ENCODE measurements at regions of chr20 and their contacts with region 1.

Region 1: DNA sequence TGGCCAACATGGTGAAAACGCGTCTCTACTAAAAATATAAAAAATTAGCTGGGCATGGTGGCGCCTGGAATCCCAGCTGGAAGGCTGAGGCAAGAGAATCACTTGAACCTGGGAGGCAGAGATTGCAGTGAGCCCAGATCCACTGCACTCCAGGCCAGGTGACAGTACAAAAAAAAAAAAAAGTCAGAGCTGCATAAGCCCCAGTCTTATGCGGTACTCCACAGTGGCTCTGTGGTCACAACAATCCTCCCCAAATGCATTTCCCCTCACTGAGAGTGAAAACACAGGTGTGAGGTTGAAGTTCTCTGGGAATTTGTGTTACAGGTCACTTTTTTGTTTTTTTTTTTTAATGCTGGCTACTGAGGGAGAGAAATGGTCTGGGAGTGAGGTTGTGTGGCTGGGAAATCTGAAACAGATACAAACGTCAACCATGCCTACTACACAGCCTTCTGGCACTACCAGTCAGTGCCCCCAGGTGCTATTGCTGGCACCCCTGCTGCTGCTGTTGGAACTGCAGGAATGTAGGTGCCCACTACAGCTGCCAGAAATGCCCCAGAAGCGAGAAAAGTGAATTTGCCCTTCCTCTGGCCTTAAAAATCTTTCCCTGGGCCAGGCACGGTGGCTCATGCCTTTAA is 5.7 kb downstream of the MRPS26 start:
- DNase-seq: no peak
- ATAC-seq: no peak
- H3K4me3 ChIP-seq: no peak overlapping the region
- H3K4me1 ChIP-seq: peaks cover 12% of the 10 kb centered on the region
- CTCF ChIP-seq: no peak

Region 2: GRCh38 chr20:2967841-2968240 is 83.7 kb before region 1 on chr20:
- intact Hi-C with region 1: no loop called
- DNase-seq: no peak
- ATAC-seq: no peak
- H3K4me3 ChIP-seq: no peak overlapping the region
- H3K4me1 ChIP-seq: no peaks in the 10 kb centered on the region
- CTCF ChIP-seq: no peak

Region 3: GRCh38 chr20:3115190-3116107 is 63.9 kb after region 1 on chr20:
- intact Hi-C with region 1: loop called in 1 of 2 experiments (anchors 10 kb)
- DNase-seq: peak in 1 of 3 donors; percentile 15
- ATAC-seq: peak; percentile 78
- H3K4me3 ChIP-seq: no peak overlapping the region
- H3K4me1 ChIP-seq: no peaks in the 10 kb centered on the region
- CTCF ChIP-seq: peak; percentile 72